A673 (cell line): ENCODE measurements at regions of chr15 and their contacts with region 1.

Region 1: DNA sequence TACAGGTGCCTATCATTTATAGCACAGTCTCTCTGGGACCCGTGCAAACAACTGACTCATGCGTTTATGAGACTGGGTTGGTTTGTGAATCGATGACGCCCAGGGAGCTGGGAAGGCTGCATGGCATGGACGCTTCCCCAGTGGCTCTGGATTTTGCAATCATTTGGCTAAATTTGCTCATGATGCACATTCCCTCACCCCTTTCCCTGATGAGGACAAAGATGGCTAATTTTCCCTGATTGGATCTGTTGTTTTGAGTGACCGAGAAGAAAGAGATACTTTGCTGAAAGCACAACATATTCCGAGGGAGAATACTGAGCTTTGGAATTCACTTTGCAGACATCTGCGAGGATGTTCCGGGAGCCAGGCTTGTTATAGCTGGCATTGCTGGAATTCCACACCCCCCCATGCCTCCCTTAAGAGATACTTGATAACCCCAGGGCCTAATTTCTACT is 51.1 kb downstream of the CGNL1 start:
- DNase-seq: no peak
- H3K4me3 ChIP-seq: no peak overlapping the region
- H3K27ac ChIP-seq: no peak overlapping the region
- H3K4me1 ChIP-seq: no peaks in the 10 kb centered on the region
- H3K27me3 ChIP-seq: no peaks in the 10 kb centered on the region
- CTCF ChIP-seq: no peak

Region 2: DNA sequence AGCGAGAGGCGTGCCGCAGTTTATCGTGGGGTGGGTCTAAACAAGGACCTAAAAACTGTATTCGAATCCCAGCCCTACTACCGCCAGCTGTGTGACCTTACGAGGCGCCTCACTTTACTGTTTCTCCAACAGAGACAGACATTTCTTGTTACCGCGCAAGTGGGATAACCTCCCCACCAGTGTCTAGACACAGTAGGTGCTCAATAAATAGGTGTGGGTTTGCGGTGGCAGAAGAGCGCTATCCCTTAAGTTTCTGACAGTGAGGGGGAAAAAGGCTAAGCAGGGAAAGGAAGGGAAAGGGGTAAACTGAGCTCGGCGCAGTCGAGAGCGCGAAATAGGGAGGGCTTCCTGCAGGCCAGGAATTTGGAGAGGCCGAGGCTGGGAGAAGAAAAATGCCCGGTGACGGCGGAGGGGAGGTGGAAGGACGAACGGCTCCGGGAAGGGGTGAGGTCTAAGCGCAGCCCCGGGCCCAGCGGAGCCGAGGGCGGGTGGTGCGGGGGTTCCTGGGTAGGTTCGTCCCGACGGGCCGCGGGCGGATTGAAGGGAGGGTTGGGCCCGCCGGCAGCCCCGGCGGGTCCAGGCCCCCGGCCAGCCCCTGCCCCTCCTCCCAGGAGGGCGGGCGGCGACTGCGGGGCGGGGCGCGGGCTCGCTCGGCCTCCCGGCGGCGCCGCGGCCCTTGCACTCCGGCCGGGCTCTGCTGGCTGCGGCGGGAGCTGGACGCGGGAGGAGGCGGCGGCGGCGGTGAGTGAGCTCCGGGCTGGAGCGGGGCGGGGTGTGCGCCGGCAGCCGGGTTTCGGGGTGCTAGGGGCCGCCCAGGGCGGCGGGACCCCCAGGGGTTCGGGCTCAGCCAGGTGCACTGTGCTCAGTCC is 51.3 kb before region 1 on chr15 and contains the start of gene CGNL1:
- CTCF ChIA-PET with region 1: no interaction called
- POLR2A ChIA-PET with region 1: no interaction called
- intact Hi-C with region 1: no loop called
- DNase-seq: no peak
- H3K4me3 ChIP-seq: peak within 1 kb of the TSS; percentile 58
- H3K27ac ChIP-seq: no peak within 1 kb of the TSS
- H3K4me1 ChIP-seq: no peaks in the 10 kb centered on the region
- H3K27me3 ChIP-seq: peaks cover 8% of the 10 kb centered on the region
- CTCF ChIP-seq: no peak
- total RNA-seq, gene CGNL1: 0.58 and 1.1 TPM in 2 replicates

Region 3: GRCh38 chr15:57406062-57406772 is 21.2 kb before region 1 on chr15:
- CTCF ChIA-PET with region 1: no interaction called
- POLR2A ChIA-PET with region 1: no interaction called
- intact Hi-C with region 1: no loop called
- DNase-seq: peak; percentile 14
- H3K4me3 ChIP-seq: no peak overlapping the region
- H3K27ac ChIP-seq: no peak overlapping the region
- H3K4me1 ChIP-seq: no peaks in the 10 kb centered on the region
- H3K27me3 ChIP-seq: no peaks in the 10 kb centered on the region
- CTCF ChIP-seq: no peak

Region 4: DNA sequence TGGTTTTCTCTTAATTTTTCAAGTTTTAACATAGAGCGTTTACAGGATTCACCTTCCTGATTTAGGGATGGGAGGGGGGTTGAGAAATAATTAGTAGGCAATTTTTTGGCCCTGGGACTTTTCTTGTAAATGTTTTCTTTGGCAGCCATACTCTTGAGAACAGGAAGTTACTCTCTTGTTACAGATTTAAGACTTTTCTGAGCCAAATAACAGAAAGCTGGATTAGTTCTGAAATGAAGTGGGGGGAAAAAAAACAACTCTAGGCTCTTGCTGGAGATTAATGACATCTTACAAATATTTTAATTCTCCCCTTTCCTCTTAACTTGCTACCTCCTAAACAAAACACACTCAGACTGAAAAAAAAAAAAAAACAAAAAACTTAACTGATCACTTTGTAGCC is 265.3 kb after region 1 on chr15:
- CTCF ChIA-PET with region 1: no interaction called
- POLR2A ChIA-PET with region 1: no interaction called
- intact Hi-C with region 1: no loop called
- DNase-seq: peak; percentile 33
- H3K4me3 ChIP-seq: no peak overlapping the region
- H3K27ac ChIP-seq: peak overlapping the region; percentile 6
- H3K4me1 ChIP-seq: peaks cover 33% of the 10 kb centered on the region
- H3K27me3 ChIP-seq: no peaks in the 10 kb centered on the region
- CTCF ChIP-seq: no peak

Region 5: GRCh38 chr15:58677426-58677825 is 1250.0 kb after region 1 on chr15:
- CTCF ChIA-PET with region 1: no interaction called
- POLR2A ChIA-PET with region 1: interaction called, 22 read pairs
- intact Hi-C with region 1: no loop called
- DNase-seq: no peak
- H3K4me3 ChIP-seq: no peak overlapping the region
- H3K27ac ChIP-seq: no peak overlapping the region
- H3K4me1 ChIP-seq: no peaks in the 10 kb centered on the region
- H3K27me3 ChIP-seq: no peaks in the 10 kb centered on the region
- CTCF ChIP-seq: peak; percentile 25; the same call in 1 of the 2 replicates